H1 (cell line): ENCODE measurements at regions of chr2 and their contacts with region 1.

Region 1: DNA sequence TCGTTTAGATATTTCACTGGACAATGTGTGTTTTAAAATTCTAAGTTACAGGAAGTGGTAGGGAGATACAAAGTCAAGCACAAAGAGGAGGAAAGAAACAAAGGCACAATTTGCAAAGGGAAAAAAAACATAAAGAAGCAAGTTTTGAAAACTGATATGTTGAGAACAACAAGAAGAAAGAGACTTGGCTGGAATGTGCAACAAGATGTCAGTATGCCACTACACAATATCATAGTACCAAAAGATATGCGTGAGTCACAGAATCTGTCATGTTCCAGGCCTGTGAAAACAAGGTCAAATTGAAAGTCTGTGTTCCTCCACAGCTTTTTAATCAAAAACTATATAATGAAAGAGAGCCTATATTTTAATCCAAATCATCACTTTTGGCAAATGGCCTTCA is 12.0 kb downstream of the EXOC6B start:
- DNase-seq: no peak
- H3K4me3 ChIP-seq: no peak overlapping the region
- H3K27ac ChIP-seq: no peak overlapping the region
- H3K4me1 ChIP-seq: no peaks in the 10 kb centered on the region
- H3K27me3 ChIP-seq: no peaks in the 10 kb centered on the region
- CTCF ChIP-seq: no peak
- EP300 ChIP-seq: no peak
- POLR2A ChIP-seq: no peak
- RAD21 ChIP-seq: no peak

Region 2: DNA sequence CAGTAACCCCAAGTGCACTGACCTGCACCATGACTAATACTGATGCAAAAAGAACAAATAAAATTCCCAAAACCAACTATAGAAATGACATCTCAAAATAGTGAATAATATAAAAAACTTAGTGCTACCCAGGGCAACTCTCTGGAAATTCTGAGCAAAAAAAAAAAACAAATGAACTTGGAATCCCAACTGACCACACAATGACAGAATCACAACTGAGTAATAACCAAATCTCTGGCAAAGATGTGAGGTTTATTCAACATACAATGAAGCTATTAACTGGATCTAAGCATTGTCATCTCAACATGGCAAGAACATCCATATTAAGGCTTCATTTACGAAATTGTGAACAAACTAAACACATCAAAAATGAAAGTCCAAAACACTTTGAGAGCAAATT is 10.7 kb before region 1 on chr2:
- CTCF ChIA-PET with region 1: interaction called, 13 read pairs
- POLR2A ChIA-PET with region 1: interaction called, 4 read pairs
- DNase-seq: no peak
- H3K4me3 ChIP-seq: no peak overlapping the region
- H3K27ac ChIP-seq: no peak overlapping the region
- H3K4me1 ChIP-seq: no peaks in the 10 kb centered on the region
- H3K27me3 ChIP-seq: no peaks in the 10 kb centered on the region
- CTCF ChIP-seq: no peak
- EP300 ChIP-seq: no peak
- POLR2A ChIP-seq: no peak
- RAD21 ChIP-seq: no peak

Region 3: DNA sequence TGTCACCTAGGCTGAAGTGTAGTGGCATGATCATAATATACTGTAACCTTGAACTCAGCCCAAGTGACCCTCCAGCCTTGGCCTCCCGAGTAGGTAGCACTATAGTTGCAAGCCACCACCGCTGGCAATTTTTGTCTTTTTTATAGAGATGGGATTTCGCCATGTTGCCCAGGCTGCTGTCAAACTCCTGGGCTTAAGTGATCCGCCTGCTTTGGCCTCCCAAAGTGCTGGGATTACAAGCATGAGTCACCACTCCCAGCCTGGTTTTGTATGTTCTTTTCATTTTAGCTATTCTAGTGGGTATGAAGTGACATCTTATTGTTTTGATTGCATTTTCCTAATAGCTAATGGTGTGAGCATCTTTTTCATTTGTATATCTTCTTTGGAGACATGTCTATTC is 23.3 kb after region 1 on chr2:
- CTCF ChIA-PET with region 1: interaction called, 17 read pairs
- POLR2A ChIA-PET with region 1: no interaction called
- DNase-seq: no peak
- H3K4me3 ChIP-seq: no peak overlapping the region
- H3K27ac ChIP-seq: no peak overlapping the region
- H3K4me1 ChIP-seq: no peaks in the 10 kb centered on the region
- H3K27me3 ChIP-seq: no peaks in the 10 kb centered on the region
- CTCF ChIP-seq: no peak
- EP300 ChIP-seq: no peak
- POLR2A ChIP-seq: no peak
- RAD21 ChIP-seq: no peak